GM10248 (cell line): ENCODE measurements at regions of chr7 and their contacts with region 1.

Region 1: GRCh38 chr7:131688738-131689661 is 132.6 kb upstream of the PODXL start:
- DNase-seq: peak; percentile 87
- CTCF ChIP-seq: peak; percentile 96

Region 2: DNA sequence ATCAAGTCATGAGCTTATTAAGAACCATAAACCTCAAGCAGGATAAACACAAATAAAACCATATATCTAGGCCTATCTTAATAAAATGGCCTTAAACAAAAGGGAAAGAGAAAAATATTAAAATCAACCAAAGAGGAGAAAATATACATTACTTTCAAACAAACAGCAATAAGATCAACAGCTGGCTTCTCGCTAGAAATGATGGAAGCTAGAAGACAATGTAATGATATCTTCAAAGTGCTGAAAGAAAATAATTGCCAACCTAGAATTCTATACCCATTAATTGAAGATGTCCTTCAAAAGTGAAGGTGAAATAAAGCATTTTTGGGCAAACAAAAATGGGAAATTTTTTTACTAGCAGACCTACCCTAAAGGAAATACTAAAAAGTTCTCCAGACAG is 10.3 kb after region 1 on chr7:
- CTCF ChIA-PET with region 1: interaction called, 65 read pairs
- POLR2A ChIA-PET with region 1: interaction called, 3 read pairs
- DNase-seq: no peak
- CTCF ChIP-seq: no peak

Region 3: DNA sequence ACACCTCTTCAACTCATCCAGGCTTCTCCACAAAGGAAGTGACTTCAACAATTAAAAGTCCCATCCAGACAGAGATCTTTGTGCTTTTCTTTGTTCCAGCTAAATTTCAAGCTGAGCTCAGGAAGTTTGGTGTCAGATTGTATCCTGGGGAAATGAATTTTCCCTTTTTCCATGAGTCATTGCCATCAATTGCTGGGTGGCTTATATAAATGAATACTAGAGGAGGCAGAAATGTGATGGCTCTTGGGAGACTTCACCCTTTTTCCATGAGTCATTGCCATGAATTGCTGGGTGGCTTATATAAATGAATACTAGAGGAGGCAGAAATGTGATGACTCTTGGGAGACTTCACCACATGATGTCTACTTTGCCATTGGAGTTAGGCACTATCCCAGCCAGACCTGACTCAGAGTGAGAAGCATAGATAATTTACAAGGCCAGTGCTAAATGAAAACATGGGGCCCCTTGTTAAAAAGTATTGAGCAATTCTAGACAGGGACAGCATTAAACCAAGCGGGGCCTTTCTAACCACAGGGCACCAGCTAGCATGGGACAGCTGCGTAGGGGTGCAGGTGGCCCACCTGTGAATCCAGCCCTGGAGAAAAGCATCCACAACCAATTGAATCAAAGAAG is 206.7 kb after region 1 on chr7:
- CTCF ChIA-PET with region 1: no interaction called
- POLR2A ChIA-PET with region 1: no interaction called
- DNase-seq: no peak
- CTCF ChIP-seq: no peak

Region 4: DNA sequence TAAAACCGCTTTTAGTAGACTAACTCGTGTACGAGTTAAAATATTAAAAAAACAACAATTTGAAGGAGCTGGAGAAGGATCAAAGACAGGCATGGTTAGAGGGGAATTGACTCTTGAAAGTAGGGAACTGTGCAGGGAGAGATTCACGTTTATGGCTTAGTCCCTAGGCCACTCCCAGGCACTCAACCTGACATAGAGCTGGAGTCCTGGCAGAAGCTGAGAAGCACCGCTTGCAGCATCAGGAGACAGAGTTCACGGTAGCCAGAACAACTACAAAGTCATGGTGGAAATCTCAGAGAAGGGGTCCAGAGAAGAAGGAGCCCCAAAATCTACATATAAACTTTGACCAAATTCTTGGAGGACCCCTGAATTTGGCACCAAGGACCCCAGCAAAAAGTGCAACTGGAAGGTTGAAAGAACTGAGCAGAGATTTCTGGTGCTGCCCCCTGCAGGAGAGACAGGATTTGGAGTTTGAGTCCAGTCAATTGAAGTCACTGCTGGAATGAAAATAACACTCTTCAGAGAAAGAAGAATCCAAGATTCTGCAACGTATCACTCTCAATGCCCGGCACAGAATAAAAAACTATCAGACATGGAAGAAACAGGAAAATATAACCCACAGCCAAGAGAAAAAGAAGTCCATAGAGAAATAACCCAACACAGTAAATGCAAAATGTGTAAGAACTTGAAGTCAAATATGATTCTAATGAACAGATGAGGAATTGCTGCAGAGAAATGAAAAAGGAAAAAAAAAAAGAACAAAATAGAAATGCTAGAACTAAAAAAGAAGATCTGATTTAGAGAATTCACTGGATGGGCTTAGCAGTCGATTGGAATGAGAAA is 360.7 kb after region 1 on chr7:
- CTCF ChIA-PET with region 1: interaction called, 11 read pairs
- POLR2A ChIA-PET with region 1: no interaction called
- DNase-seq: peak; percentile 31
- CTCF ChIP-seq: peak; percentile 52

Region 5: DNA sequence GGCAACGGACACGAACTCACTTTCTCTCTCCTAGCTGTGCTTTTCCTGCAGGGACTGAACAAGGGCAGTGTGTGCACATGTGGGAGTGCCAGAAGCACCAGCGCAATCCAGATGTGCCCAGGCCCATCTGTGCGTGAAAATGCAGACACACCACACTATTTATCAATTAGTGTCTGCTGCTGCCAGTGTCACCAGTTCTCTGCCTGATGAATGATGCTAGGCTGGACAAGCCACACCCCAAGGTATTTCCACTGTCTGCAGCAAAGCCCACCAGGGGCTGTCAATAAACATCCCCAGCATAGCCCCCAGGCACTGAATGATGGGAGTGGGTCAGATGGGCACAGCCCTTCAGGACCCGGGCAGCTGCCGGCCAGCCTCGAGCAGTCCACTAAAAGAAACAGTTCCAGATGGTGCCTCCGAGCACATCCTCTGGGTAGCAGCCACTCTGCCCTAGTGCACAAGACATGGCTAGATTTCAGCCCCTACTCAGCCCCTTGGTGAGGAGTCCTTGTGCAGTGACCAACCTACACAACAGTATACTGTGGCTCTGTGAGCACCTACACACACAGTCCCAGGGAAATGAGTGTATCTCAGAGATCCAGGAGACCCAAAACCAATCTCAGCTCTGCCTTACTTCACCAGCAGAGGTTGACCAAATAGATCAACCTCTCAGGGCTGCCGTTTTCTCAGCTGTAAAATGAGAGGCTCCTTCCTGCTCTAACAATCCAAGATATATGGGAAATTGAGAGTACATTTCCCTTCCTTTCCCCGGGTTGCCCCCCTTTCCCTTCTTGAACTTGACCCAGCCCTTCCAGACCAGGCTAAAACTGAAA is 572.5 kb after region 1 on chr7:
- CTCF ChIA-PET with region 1: no interaction called
- POLR2A ChIA-PET with region 1: no interaction called
- DNase-seq: no peak
- CTCF ChIP-seq: no peak